Cardiac septum (tissue), 1 donor: ENCODE measurements at regions of chr1 and their contacts with region 1.

Region 1: GRCh38 chr1:6052543-6053205 is 7.0 kb downstream of the KCNAB2 start:
- DNase-seq: no peak

Region 2: DNA sequence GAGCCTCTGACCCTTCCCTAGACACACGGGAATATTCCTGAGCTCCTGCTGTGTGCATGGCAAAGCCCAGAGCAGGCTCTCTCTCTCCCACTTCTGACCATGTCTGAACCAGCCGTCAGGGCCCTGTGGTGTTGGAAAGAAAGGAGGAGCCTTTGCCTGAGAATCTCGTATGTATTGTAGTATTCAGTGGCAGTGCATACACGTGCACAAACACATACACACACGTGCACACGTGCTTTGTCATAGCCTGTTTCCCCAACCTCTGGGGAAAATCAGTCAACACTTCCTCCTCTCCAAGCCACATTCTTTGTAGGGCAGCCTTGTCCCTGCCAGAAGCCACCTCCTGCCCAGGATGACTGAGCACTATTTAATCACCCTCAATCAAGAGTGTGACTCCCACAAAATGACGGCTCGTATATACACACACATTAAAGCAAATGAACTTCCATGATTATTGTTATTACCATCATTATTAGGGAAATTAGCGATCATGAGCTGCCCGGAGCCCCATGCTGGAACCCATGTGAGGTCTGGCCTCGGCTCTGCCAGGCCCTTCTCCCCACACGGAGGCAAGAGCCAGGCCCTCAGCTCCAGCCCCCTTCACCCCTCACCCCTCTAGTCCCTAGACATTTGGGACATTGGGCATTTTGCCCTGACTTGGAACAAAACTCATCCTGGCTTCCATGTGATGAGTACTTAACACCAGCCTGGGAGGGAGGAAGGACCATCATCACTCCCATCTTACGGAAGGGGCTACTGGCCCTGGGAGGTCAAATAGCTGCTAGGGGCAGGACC is 392.3 kb before region 1 on chr1:
- intact Hi-C with region 1: no loop called
- DNase-seq: peak; percentile 68

Region 3: GRCh38 chr1:5810131-5810530 is 242.5 kb before region 1 on chr1:
- intact Hi-C with region 1: no loop called
- DNase-seq: no peak

Region 4: DNA sequence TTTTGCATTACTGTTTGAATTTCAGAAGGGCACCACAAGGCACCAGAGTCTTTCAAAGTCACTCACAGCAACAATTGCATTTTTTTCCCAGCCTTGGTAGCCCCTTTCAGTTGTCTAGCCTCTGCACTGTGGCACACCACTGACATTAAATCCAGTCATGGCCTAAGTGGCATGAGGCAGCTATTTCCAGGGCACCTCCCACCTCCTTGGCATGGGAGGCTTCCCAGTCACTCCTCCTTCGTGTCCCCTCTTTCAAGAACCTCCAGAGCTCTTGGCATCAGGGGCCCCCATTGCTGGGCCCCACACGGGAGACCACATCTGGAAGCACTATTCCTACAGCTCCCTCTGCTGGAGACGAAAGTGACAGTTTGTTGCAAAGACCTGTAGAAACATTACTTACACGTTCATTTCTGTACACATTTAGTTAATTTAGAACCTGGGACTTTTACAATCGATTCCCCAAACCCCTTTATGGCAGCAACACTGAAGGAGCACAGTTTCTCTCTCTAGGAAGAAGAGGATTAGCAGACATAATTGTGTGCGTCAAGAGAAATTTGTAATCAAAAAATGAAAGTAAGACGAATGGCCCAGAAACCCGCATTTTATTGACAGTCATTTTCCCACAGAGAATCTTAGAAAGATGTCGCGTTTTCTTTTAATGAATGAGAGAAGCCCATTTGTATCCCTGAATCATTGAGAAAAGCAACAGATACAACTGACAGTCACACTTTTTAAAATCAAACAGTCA is 133.1 kb after region 1 on chr1:
- intact Hi-C with region 1: loop called (anchors 5 kb)
- DNase-seq: no peak

Region 5: GRCh38 chr1:6343506-6344405 is 291.1 kb after region 1 on chr1:
- intact Hi-C with region 1: loop called (anchors 10 kb)
- DNase-seq: no peak

Region 6: DNA sequence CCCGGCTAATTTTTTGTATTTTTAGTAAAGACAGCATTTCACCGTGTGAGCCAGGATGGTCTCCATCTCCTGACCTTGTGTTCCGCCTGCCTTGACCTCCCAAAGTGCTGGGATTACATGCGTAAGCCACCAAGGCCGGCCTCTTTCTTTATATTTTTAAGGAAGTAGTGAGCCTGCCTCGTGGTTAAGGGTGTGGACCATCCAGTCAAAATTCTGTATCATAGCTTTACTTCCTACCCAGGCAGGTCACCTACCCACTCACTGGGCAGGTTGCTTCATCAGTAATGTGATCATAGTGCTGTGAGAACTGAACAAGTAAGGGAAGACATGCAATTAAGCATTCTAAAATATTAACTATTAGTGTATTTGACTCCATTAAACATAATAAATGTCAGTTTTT is 349.0 kb after region 1 on chr1:
- intact Hi-C with region 1: loop called (anchors 10 kb)
- DNase-seq: no peak